ENCODE measurements at regions of chr2 and their contacts with region 1.

Region 1: GRCh38 chr2:33134086-33134771 is 187.5 kb downstream of the LTBP1 start:
- DNase-seq: peak; percentile 96
- H3K4me3 Mint-ChIP-seq: peak overlapping the region; percentile 91
- H3K27ac Mint-ChIP-seq: peak overlapping the region; percentile 93
- H3K4me1 Mint-ChIP-seq: peaks cover 42% of the 10 kb centered on the region
- H3K27me3 Mint-ChIP-seq: no peaks in the 10 kb centered on the region
- CTCF ChIP-seq: no peak

Region 2: GRCh38 chr2:32918774-32919173 is 215.5 kb before region 1 on chr2:
- CTCF ChIA-PET with region 1: no interaction called
- POLR2A ChIA-PET with region 1: no interaction called
- intact Hi-C with region 1: no loop called
- DNase-seq: no peak
- H3K4me3 Mint-ChIP-seq: no peak overlapping the region
- H3K27ac Mint-ChIP-seq: no peak overlapping the region
- H3K4me1 Mint-ChIP-seq: no peaks in the 10 kb centered on the region
- H3K27me3 Mint-ChIP-seq: peaks cover 14% of the 10 kb centered on the region
- CTCF ChIP-seq: no peak

Region 3: DNA sequence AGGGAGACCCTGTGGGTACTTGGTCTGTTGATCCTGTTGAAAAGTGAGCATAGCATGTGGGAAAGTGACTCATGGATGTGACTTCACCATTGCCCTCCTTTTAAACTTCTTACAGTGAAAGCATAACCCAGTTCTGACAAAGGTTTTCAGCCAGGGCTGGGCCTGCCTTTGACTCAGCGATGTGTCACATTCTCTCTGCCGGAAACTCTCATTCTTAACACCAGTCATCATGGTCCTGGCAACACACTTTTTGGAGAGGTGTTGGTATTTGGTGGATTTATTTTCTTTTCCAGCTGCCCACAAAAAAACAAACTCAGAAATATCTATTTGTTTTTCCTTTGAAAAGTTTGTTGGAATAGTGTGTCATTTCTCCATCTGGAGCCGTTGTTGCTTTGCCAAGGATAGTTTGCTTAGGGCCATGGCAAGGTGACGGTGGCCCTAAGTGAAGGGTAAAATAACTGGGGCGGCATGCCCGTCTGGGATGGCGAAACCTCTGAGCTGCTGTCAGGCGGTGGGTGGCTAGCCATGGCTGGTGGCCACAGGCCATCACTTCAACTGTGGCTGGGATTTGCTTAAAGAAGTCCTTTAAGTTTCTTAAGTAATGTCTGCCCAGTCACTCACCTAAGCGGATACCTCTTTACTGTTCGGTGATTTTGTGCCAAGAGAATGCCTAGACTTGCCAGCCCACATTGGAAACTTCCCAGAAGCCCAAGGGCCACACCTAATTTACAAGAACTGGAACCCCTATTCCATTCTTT is 64.2 kb before region 1 on chr2:
- CTCF ChIA-PET with region 1: no interaction called
- POLR2A ChIA-PET with region 1: interaction called, 7 read pairs
- intact Hi-C with region 1: loop called (anchors 1 kb)
- DNase-seq: peak; percentile 98
- H3K4me3 Mint-ChIP-seq: peak overlapping the region; percentile 62
- H3K27ac Mint-ChIP-seq: peak overlapping the region; percentile 91
- H3K4me1 Mint-ChIP-seq: peaks cover 38% of the 10 kb centered on the region
- H3K27me3 Mint-ChIP-seq: no peaks in the 10 kb centered on the region
- CTCF ChIP-seq: no peak

Region 4: GRCh38 chr2:33145459-33145858 is 11.2 kb after region 1 on chr2:
- CTCF ChIA-PET with region 1: interaction called, 4 read pairs
- POLR2A ChIA-PET with region 1: interaction called, 62 read pairs
- intact Hi-C with region 1: no loop called
- DNase-seq: no peak
- H3K4me3 Mint-ChIP-seq: no peak overlapping the region
- H3K27ac Mint-ChIP-seq: no peak overlapping the region
- H3K4me1 Mint-ChIP-seq: peaks cover 28% of the 10 kb centered on the region
- H3K27me3 Mint-ChIP-seq: no peaks in the 10 kb centered on the region
- CTCF ChIP-seq: no peak

Region 5: DNA sequence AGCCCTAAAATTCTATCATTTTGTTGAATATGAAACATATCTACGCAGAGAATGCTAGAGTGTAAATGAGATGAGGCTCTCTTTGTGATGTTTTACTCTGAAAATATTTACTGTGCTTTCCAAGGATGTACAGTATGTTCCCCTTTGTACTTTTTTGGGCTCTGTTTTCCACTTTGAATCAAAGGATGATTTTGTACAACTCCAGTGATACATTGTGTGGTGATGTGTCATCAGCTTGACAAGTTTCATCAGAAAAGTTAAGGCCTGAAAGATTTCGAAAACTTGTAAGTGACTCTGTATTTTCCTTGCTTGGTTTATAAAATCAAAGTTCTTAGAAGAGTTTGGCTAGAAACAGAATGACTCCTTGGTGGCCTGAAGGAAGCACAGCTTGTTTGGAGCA is 18.8 kb after region 1 on chr2:
- CTCF ChIA-PET with region 1: interaction called, 5 read pairs
- POLR2A ChIA-PET with region 1: interaction called, 62 read pairs
- intact Hi-C with region 1: loop called (anchors 2 kb)
- DNase-seq: peak; percentile 81
- H3K4me3 Mint-ChIP-seq: peak overlapping the region; percentile 28
- H3K27ac Mint-ChIP-seq: peak overlapping the region; percentile 83
- H3K4me1 Mint-ChIP-seq: peaks cover 44% of the 10 kb centered on the region
- H3K27me3 Mint-ChIP-seq: no peaks in the 10 kb centered on the region
- CTCF ChIP-seq: no peak

Region 6: GRCh38 chr2:33210626-33211025 is 76.4 kb after region 1 on chr2:
- CTCF ChIA-PET with region 1: interaction called, 3 read pairs
- POLR2A ChIA-PET with region 1: interaction called, 15 read pairs
- intact Hi-C with region 1: loop called (anchors 1 kb)
- DNase-seq: peak; percentile 93
- H3K4me3 Mint-ChIP-seq: peak overlapping the region; percentile 0
- H3K27ac Mint-ChIP-seq: peak overlapping the region; percentile 80
- H3K4me1 Mint-ChIP-seq: peaks cover 53% of the 10 kb centered on the region
- H3K27me3 Mint-ChIP-seq: no peaks in the 10 kb centered on the region
- CTCF ChIP-seq: no peak

Region 7: GRCh38 chr2:33372940-33373553 is 238.8 kb after region 1 on chr2:
- CTCF ChIA-PET with region 1: interaction called, 3 read pairs
- POLR2A ChIA-PET with region 1: interaction called, 3 read pairs
- intact Hi-C with region 1: loop called (anchors 5 kb)
- DNase-seq: peak; percentile 73
- H3K4me3 Mint-ChIP-seq: no peak overlapping the region
- H3K27ac Mint-ChIP-seq: no peak overlapping the region
- H3K4me1 Mint-ChIP-seq: peaks cover 13% of the 10 kb centered on the region
- H3K27me3 Mint-ChIP-seq: no peaks in the 10 kb centered on the region
- CTCF ChIP-seq: peak; percentile 72